ENCODE measurements at regions of chr4 and their contacts with region 1.

Region 1: DNA sequence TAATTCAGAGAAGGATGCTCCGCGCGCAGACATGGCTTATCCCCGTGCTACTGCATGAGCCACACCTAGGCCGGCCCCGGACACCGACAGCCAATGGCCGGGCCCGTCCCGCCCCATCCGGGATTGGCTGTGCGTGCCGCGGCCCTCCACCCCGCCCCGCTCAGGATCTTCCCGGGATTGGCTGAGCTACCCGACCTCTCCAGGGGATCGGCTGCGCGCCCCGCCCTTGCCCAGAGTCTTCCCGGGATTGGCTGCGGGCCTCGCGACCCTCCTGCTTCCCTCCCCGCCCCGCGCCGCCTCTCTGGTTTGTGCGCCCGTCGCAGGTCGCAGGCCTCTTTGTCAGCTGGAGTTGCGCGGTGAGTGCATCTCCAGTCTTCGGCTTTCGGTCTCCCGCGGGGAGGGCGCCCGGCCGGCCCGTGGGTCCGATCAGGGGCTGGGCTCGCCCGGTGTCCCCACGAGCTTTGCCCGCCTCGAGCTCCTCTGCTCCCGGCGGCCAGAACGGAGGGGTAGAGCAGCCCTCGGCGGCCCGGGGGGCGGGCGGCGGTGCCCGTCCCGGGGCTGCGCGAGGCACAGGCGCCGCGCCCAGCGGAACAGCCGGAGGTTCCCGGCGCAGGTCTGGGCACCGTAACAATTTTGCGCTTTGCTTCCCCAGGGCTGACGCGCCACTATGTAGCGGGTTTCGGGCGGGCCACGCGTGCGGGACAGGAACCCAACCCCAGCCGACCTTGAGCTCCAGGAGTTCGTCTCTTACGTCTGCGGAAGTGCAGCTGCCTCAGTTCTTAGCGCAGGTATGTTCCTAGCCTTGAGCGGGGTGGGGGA is 38.8 kb downstream of the ERVMER34-1 start:
- DNase-seq: peak; percentile 97
- H3K4me3 Mint-ChIP-seq: peak overlapping the region; percentile 98
- H3K27ac Mint-ChIP-seq: peak overlapping the region; percentile 96
- H3K4me1 Mint-ChIP-seq: peaks cover 57% of the 10 kb centered on the region
- H3K27me3 Mint-ChIP-seq: no peaks in the 10 kb centered on the region

Region 2: GRCh38 chr4:51842554-51843308 is 869.6 kb before region 1 on chr4 and contains the start of gene DCUN1D4:
- intact Hi-C with region 1: loop called (anchors 1 kb)
- DNase-seq: peak; percentile 98
- H3K4me3 Mint-ChIP-seq: peak within 1 kb of the TSS; percentile 95
- H3K27ac Mint-ChIP-seq: peak within 1 kb of the TSS; percentile 98
- H3K4me1 Mint-ChIP-seq: peaks cover 21% of the 10 kb centered on the region
- H3K27me3 Mint-ChIP-seq: peaks cover 9% of the 10 kb centered on the region
- total RNA-seq, gene DCUN1D4: 29.7 and 40.7 TPM in 2 replicates

Region 3: DNA sequence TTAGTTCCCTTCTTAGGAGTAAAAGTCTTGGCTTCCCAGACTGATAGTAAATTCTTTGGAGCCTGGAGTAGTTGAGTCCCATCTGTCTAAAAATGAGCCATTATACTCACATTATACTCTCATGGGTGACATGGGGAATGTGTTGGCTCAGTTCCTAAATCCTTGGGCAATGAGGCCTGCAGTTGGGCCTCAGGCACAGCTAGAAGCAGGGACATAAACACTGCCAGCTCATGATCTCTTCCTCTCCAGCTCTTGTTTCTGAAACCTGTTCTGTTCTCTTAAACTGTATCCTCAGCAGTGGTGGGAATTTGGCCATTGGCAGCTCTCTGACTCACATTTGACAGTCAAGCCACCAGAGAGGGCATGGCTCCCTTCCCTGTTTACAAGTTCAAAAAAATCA is 448.8 kb before region 1 on chr4:
- intact Hi-C with region 1: no loop called
- DNase-seq: no peak
- H3K4me3 Mint-ChIP-seq: no peak overlapping the region
- H3K27ac Mint-ChIP-seq: no peak overlapping the region
- H3K4me1 Mint-ChIP-seq: no peaks in the 10 kb centered on the region
- H3K27me3 Mint-ChIP-seq: no peaks in the 10 kb centered on the region

Region 4: GRCh38 chr4:52588097-52588782 is 124.1 kb before region 1 on chr4:
- intact Hi-C with region 1: loop called (anchors 2 kb)
- DNase-seq: no peak
- H3K4me3 Mint-ChIP-seq: no peak overlapping the region
- H3K27ac Mint-ChIP-seq: peak overlapping the region; percentile 45
- H3K4me1 Mint-ChIP-seq: peaks cover 7% of the 10 kb centered on the region
- H3K27me3 Mint-ChIP-seq: peaks cover 5% of the 10 kb centered on the region

Region 5: GRCh38 chr4:52861879-52862616 is 149.7 kb after region 1 on chr4 and contains the start of gene RASL11B:
- intact Hi-C with region 1: loop called (anchors 1 kb)
- DNase-seq: peak; percentile 84
- H3K4me3 Mint-ChIP-seq: peak within 1 kb of the TSS; percentile 81
- H3K27ac Mint-ChIP-seq: no peak within 1 kb of the TSS
- H3K4me1 Mint-ChIP-seq: peaks cover 16% of the 10 kb centered on the region
- H3K27me3 Mint-ChIP-seq: peaks cover 36% of the 10 kb centered on the region
- total RNA-seq, gene RASL11B: 1.6 and 2.3 TPM in 2 replicates

Region 6: GRCh38 chr4:53365486-53366300 is 653.3 kb after region 1 on chr4 and contains the start of gene SCFD2:
- intact Hi-C with region 1: loop called (anchors 1 kb)
- DNase-seq: peak; percentile 95
- H3K4me3 Mint-ChIP-seq: peak within 1 kb of the TSS; percentile 98
- H3K27ac Mint-ChIP-seq: peak within 1 kb of the TSS; percentile 88
- H3K4me1 Mint-ChIP-seq: peaks cover 39% of the 10 kb centered on the region
- H3K27me3 Mint-ChIP-seq: peaks cover 5% of the 10 kb centered on the region
- total RNA-seq, gene SCFD2: 39.4 and 40.5 TPM in 2 replicates

Measured in activated T-helper 1 cell treated with anti-CD3 and anti-CD28 coated beads, Interleukin-12 subunit alpha, Interleukin-12 subunit beta, Interleukin-2, Interleukin-4 antibody, amounts not matched to agents 30 ng/mL and 10 ng/mL and 1 ng/mL, durations not matched to agents 14 hours and 24 hours and 36 hours (primary cell).